Transverse colon (tissue), 4 donors: ENCODE measurements at regions of chrX and their contacts with region 1.

Region 1: DNA sequence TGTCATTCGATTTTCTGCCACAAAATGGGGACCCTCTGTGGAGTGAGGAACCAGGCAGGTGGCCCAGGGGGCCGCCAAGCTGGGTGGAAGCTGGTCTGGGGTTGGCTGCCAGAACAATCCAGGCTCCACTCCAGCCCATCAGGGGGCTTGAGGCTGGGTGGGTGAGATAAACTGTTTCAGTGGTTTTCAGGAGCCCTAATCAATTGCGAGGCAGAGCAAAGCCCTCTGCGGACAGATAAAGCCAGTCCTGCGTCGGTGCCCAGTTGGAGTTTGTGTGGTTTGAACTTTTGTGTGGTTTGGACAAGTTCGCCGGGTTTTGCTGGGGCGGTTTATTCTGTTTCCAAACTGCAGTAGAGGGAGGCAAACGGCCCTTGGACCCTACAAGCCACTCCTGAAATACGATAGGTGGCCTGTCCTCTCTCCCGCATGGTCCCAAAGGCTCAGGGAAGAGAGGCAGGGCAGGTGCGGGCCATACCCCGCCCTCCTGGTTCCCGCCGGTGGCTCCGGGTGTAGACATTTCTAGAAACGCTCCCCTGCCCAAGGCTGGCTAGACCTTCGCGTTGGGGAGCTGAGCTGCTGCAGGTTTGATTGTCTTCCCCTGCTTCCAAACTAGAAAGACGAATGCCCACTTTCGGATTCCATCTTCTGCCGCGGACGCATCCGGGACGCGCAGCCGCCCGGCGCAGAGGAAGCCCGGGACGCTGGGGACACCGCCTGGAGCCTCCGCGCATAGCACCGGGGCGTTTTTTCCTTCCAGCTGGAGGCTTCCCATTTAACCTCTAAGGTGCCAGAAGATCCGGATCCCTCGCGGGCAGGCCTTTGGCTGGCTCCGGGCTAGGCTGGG is 169.0 kb upstream of the BCOR start:
- DNase-seq: peak; percentile 73
- H3K4me3 ChIP-seq: peak overlapping the region in 3 of 4 donors; percentile 31 to 55 (median 40)
- H3K27ac ChIP-seq: peak overlapping the region; percentile 63 to 72 (median 70)
- H3K4me1 ChIP-seq: peaks cover 0 to 9% (median 3%) of the 10 kb centered on the region in 4 donors
- H3K27me3 ChIP-seq: no peaks in the 10 kb centered on the region
- CTCF ChIP-seq: peak; percentile 55 to 69 (median 60)
- EP300 ChIP-seq: no peak
- POLR2A ChIP-seq: no peak

Region 2: GRCh38 chrX:40188573-40189432 is 77.9 kb before region 1 on chrX:
- in situ Hi-C with region 1: loop called in 1 of 4 experiments (anchors 10 kb)
- intact Hi-C with region 1: no loop called
- DNase-seq: no peak
- H3K4me3 ChIP-seq: no peak overlapping the region
- H3K27ac ChIP-seq: no peak overlapping the region
- H3K4me1 ChIP-seq: no peaks in the 10 kb centered on the region
- H3K27me3 ChIP-seq: no peaks in the 10 kb centered on the region
- CTCF ChIP-seq: no peak
- EP300 ChIP-seq: no peak
- POLR2A ChIP-seq: no peak

Region 3: DNA sequence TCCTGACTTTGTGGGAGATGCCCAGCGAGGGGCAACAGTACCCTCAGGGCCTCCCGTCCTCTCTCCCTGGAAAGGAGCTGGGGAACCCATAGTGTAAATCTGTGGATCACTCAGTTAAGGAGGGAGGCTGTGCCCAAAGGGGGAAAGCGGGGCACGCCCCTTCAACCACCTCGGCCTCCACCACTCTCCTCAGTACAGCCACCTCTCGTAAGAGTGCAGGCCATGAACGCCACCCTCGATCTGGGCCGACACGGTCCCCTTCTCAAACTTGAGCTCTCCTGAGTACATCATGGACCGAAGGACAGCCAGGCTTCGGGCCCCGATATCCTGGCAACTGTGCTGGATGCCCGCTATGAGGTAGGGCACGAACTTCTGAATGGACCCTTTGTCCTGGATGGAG is 92.3 kb after region 1 on chrX:
- in situ Hi-C with region 1: no loop called
- intact Hi-C with region 1: no loop called
- DNase-seq: no peak
- H3K4me3 ChIP-seq: no peak overlapping the region
- H3K27ac ChIP-seq: no peak overlapping the region
- H3K4me1 ChIP-seq: no peaks in the 10 kb centered on the region
- H3K27me3 ChIP-seq: no peaks in the 10 kb centered on the region
- CTCF ChIP-seq: no peak
- EP300 ChIP-seq: no peak
- POLR2A ChIP-seq: no peak

Region 4: GRCh38 chrX:40971736-40972135 is 705.0 kb after region 1 on chrX:
- in situ Hi-C with region 1: no loop called
- intact Hi-C with region 1: no loop called
- DNase-seq: no peak
- H3K4me3 ChIP-seq: no peak overlapping the region
- H3K27ac ChIP-seq: no peak overlapping the region
- H3K4me1 ChIP-seq: no peaks in the 10 kb centered on the region
- H3K27me3 ChIP-seq: no peaks in the 10 kb centered on the region
- CTCF ChIP-seq: no peak
- EP300 ChIP-seq: no peak
- POLR2A ChIP-seq: no peak